ENCODE measurements at regions of chr9 and their contacts with region 1.

Region 1: DNA sequence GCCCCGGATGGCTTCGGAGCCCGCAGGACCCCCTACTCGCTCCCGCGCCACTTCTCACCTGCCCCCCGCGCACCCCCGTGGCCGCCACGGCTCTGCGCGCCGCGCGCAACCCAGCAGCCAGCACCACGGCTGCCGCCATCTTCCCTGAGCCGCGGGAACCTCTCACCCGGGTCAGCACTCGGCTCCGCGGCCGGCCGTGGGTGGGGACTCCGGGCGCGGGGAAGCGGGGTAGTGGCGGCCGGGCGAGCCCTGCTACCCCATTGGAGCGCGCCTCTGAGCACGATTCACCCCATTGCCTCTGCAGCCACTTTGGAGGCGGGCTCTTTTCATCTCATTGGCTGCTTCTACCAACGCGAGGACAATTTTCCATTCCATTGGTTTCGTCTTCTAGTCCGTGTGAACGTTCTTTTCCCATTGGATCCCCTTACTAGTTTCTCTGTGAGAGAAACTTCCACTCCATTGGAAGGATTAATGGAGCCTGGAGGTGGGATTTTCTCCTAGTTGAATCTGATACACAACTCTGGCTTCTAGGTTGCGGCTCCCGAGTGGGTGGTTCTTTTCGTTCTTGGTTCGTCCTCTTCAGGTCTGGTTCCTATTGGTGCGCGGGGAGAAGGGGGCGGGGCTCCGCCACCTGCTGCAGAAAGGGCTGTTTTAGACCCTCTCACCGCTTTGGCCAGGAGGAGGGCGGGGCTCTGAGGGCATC is at the start of gene HINT2:
- DNase-seq: peak; percentile 93 to 99 (median 96)
- ATAC-seq: peak; percentile 79
- H3K4me3 ChIP-seq: peak within 1 kb of the TSS; percentile 80
- H3K4me3 Mint-ChIP-seq: peak within 1 kb of the TSS; percentile 91
- H3K27ac ChIP-seq: peak within 1 kb of the TSS; percentile 68 to 87
- H3K27ac Mint-ChIP-seq: peak within 1 kb of the TSS; percentile 91
- H3K4me1 ChIP-seq: peaks cover 42% of the 10 kb centered on the region
- H3K4me1 Mint-ChIP-seq: peaks cover 43% of the 10 kb centered on the region
- H3K27me3 ChIP-seq: no peaks in the 10 kb centered on the region
- H3K27me3 Mint-ChIP-seq: no peaks in the 10 kb centered on the region
- CTCF ChIP-seq: no peak
- total RNA-seq, gene HINT2: 10.9 to 12.6 TPM

Region 2: DNA sequence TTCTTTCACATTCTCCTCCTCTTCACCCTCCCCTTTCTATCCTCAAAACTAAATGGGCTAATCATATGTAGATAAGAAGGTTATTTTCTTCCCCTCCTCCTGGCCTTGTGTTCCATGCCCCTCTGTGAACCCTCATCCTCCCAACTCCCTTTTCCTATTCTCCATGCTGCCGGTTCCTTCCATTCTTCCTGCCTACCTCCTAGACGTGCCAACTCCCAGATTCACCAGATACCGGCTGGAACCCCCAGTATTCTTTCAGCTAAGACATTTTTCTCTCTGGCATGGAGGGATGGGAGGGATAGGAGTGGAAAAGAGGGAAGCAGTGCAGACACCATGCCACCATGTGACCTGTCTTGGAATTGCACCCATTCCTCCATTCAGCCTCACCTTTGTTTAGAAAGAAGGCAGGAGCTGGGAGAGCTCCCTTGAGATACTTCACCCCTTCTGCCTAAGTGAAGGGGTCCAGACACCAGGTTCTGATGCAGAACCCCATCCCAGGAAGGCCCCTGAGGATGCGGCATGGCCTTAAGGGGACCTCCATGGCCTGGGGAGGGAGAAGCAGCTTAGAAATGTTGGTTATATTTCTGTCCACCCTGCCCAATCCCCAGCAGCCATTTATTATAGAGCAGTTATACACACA is 820.6 kb before region 1 on chr9:
- CTCF ChIA-PET with region 1: no interaction called
- POLR2A ChIA-PET with region 1: no interaction called
- intact Hi-C with region 1: loop called in 1 of 2 experiments (anchors 5 kb)
- DNase-seq: no peak
- ATAC-seq: no peak
- H3K4me3 ChIP-seq: no peak overlapping the region
- H3K4me3 Mint-ChIP-seq: no peak overlapping the region
- H3K27ac ChIP-seq: no peak overlapping the region
- H3K27ac Mint-ChIP-seq: no peak overlapping the region
- H3K4me1 ChIP-seq: peaks cover 11% of the 10 kb centered on the region
- H3K4me1 Mint-ChIP-seq: peaks cover 8% of the 10 kb centered on the region
- H3K27me3 ChIP-seq: no peaks in the 10 kb centered on the region
- H3K27me3 Mint-ChIP-seq: no peaks in the 10 kb centered on the region
- CTCF ChIP-seq: peak; percentile 30

Region 3: GRCh38 chr9:35111001-35111933 is 703.7 kb before region 1 on chr9:
- CTCF ChIA-PET with region 1: no interaction called
- POLR2A ChIA-PET with region 1: no interaction called
- intact Hi-C with region 1: loop called (anchors 5 to 10 kb)
- DNase-seq: peak; percentile 92 to 98 (median 96)
- ATAC-seq: peak; percentile 80
- H3K4me3 ChIP-seq: peak overlapping the region; percentile 73
- H3K4me3 Mint-ChIP-seq: peak overlapping the region; percentile 93
- H3K27ac ChIP-seq: peak overlapping the region; percentile 70 to 74
- H3K27ac Mint-ChIP-seq: peak overlapping the region; percentile 84
- H3K4me1 ChIP-seq: peaks cover 54% of the 10 kb centered on the region
- H3K4me1 Mint-ChIP-seq: peaks cover 61% of the 10 kb centered on the region
- H3K27me3 ChIP-seq: no peaks in the 10 kb centered on the region
- H3K27me3 Mint-ChIP-seq: no peaks in the 10 kb centered on the region
- CTCF ChIP-seq: no peak

Region 4: GRCh38 chr9:35152936-35153335 is 662.1 kb before region 1 on chr9:
- CTCF ChIA-PET with region 1: no interaction called
- POLR2A ChIA-PET with region 1: no interaction called
- intact Hi-C with region 1: no loop called
- DNase-seq: no peak
- ATAC-seq: no peak
- H3K4me3 ChIP-seq: no peak overlapping the region
- H3K4me3 Mint-ChIP-seq: no peak overlapping the region
- H3K27ac ChIP-seq: no peak overlapping the region
- H3K27ac Mint-ChIP-seq: no peak overlapping the region
- H3K4me1 ChIP-seq: no peaks in the 10 kb centered on the region
- H3K4me1 Mint-ChIP-seq: no peaks in the 10 kb centered on the region
- H3K27me3 ChIP-seq: no peaks in the 10 kb centered on the region
- H3K27me3 Mint-ChIP-seq: no peaks in the 10 kb centered on the region
- CTCF ChIP-seq: no peak

Region 5: GRCh38 chr9:35748858-35749514 is 66.0 kb before region 1 on chr9 and contains the starts of genes GBA2 and RGP1:
- CTCF ChIA-PET with region 1: no interaction called
- POLR2A ChIA-PET with region 1: interaction called, 10 read pairs
- intact Hi-C with region 1: loop called in 1 of 2 experiments (anchors 5 kb)
- DNase-seq: peak; percentile 25 to 77 (median 58)
- ATAC-seq: peak; percentile 59
- H3K4me3 ChIP-seq: peak within 1 kb of the TSS; percentile 98
- H3K4me3 Mint-ChIP-seq: peak within 1 kb of the TSS; percentile 99
- H3K27ac ChIP-seq: peak within 1 kb of the TSS; percentile 65 to 85
- H3K27ac Mint-ChIP-seq: peak within 1 kb of the TSS; percentile 88
- H3K4me1 ChIP-seq: peaks cover 48% of the 10 kb centered on the region
- H3K4me1 Mint-ChIP-seq: peaks cover 51% of the 10 kb centered on the region
- H3K27me3 ChIP-seq: no peaks in the 10 kb centered on the region
- H3K27me3 Mint-ChIP-seq: no peaks in the 10 kb centered on the region
- CTCF ChIP-seq: no peak
- total RNA-seq, gene GBA2: 17.3 to 18.6 TPM
- total RNA-seq, gene RGP1: 12.6 to 13.1 TPM

Region 6: GRCh38 chr9:35790385-35791296 is 24.4 kb before region 1 on chr9:
- CTCF ChIA-PET with region 1: interaction called, 10 read pairs
- POLR2A ChIA-PET with region 1: no interaction called
- intact Hi-C with region 1: no loop called
- DNase-seq: peak; percentile 32 to 84 (median 44)
- ATAC-seq: peak; percentile 97
- H3K4me3 ChIP-seq: no peak overlapping the region
- H3K4me3 Mint-ChIP-seq: no peak overlapping the region
- H3K27ac ChIP-seq: no peak overlapping the region
- H3K27ac Mint-ChIP-seq: no peak overlapping the region
- H3K4me1 ChIP-seq: peaks cover 5% of the 10 kb centered on the region
- H3K4me1 Mint-ChIP-seq: peaks cover 7% of the 10 kb centered on the region
- H3K27me3 ChIP-seq: no peaks in the 10 kb centered on the region
- H3K27me3 Mint-ChIP-seq: no peaks in the 10 kb centered on the region
- CTCF ChIP-seq: peak; percentile 89

Region 7: GRCh38 chr9:35829084-35829763 is 14.2 kb after region 1 on chr9 and contains the start of gene TMEM8B:
- CTCF ChIA-PET with region 1: interaction called, 7 read pairs
- POLR2A ChIA-PET with region 1: interaction called, 14 read pairs
- intact Hi-C with region 1: loop called (anchors 1 kb)
- DNase-seq: peak; percentile 89 to 98 (median 94)
- ATAC-seq: peak; percentile 94
- H3K4me3 ChIP-seq: peak within 1 kb of the TSS; percentile 92
- H3K4me3 Mint-ChIP-seq: peak within 1 kb of the TSS; percentile 97
- H3K27ac ChIP-seq: peak within 1 kb of the TSS; percentile 44 to 47
- H3K27ac Mint-ChIP-seq: peak within 1 kb of the TSS; percentile 83
- H3K4me1 ChIP-seq: peaks cover 35% of the 10 kb centered on the region
- H3K4me1 Mint-ChIP-seq: peaks cover 40% of the 10 kb centered on the region
- H3K27me3 ChIP-seq: no peaks in the 10 kb centered on the region
- H3K27me3 Mint-ChIP-seq: no peaks in the 10 kb centered on the region
- CTCF ChIP-seq: no peak
- total RNA-seq, gene TMEM8B: 8.9 to 9.6 TPM